ENCODE measurements at regions of chr12 and their contacts with region 1.

Region 1: DNA sequence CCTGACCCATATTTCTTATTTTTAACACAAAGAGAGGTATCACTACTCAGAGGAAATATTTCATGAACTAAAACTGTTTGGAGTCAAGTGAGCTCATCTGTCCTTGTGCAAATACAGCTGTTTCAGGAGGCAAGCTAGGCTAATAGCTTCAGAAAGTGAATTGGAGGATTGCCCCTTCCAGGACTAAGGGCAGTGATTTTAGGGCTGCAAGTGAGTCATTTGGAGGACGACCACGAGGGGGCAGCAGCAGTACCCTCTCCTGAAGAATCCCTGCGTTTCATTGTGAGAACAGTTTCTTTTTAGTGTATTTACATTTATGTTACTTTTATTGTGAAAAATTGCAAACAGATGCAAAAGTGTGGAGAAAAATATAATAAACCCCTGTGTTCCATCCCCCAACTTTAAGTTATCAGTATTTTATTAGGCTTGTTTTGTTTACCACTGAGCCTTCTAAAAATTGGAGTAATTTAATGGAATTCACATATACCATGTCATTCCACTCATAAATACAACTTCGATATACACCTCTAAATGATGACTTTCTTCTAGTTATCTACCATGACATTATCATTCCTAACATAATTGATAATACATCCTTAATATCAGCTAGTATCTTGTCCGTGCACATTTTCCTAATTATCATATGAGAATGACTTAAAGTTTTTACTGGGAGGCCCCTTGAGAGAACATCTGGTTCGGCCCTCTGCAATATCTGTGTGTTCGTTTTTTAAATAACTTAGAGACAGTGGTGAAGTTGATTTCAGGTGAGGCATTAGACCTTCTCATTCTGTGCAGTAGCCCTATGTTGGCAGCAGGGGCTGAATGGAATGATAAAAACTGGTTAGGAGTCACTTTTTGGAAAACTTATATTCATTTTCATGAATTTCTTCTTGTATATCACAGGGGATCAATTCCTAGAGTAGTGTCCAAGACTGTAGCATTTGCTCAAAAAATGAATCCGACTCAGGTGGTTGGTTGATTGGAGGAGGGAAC is 13.7 kb downstream of the FOXJ2 start:
- DNase-seq: peak; percentile 60
- ATAC-seq: peak; percentile 74
- H3K4me3 Mint-ChIP-seq: no peak overlapping the region
- H3K27ac Mint-ChIP-seq: no peak overlapping the region
- H3K4me1 Mint-ChIP-seq: peaks cover 16% of the 10 kb centered on the region
- H3K27me3 Mint-ChIP-seq: no peaks in the 10 kb centered on the region
- CTCF ChIP-seq: peak; percentile 70

Region 2: DNA sequence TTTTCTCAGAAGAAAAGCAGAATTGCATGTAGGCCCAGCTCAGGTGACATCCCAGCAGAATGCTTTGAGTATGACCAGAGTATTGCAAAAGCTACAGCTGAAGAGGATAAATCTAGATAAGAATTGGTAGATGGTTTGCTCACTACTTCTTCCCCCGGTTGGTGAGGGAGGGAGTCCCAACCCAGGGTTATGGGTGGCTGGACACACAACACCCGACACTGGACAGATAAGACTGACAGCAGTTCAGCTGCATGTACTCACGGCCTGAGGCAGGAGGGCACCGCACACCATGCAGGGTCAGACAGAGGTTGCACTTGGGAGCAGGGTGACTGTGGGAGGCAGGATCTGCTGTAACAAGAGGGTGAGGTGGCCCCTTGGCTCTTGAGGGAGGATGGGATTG is 297.4 kb before region 1 on chr12:
- CTCF ChIA-PET with region 1: no interaction called
- POLR2A ChIA-PET with region 1: no interaction called
- intact Hi-C with region 1: no loop called
- DNase-seq: no peak
- ATAC-seq: no peak
- H3K4me3 Mint-ChIP-seq: no peak overlapping the region
- H3K27ac Mint-ChIP-seq: peak overlapping the region; percentile 65
- H3K4me1 Mint-ChIP-seq: peaks cover 27% of the 10 kb centered on the region
- H3K27me3 Mint-ChIP-seq: peaks cover 10% of the 10 kb centered on the region
- CTCF ChIP-seq: no peak

Region 3: DNA sequence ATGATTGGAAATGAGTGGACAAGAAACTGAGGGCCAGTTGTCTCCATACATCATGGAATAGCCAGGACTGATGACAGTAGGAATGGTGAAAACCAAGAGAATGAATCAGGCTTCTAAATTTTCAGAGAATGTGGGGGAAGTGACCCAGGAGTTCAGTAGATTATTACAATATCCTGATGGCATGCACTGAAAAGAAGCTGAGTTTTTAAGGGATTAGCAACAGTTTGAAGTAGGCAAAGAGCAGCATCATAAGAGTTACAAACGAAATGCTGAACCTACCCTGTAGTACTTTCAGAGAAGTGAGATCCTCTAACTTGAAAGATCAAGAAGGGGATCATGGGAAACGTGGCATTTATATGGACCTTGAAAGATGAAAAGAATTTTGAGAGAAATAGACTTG is 186.7 kb before region 1 on chr12:
- CTCF ChIA-PET with region 1: interaction called, 10 read pairs
- POLR2A ChIA-PET with region 1: no interaction called
- intact Hi-C with region 1: no loop called
- DNase-seq: no peak
- ATAC-seq: no peak
- H3K4me3 Mint-ChIP-seq: no peak overlapping the region
- H3K27ac Mint-ChIP-seq: no peak overlapping the region
- H3K4me1 Mint-ChIP-seq: peaks cover 2% of the 10 kb centered on the region
- H3K27me3 Mint-ChIP-seq: peaks cover 8% of the 10 kb centered on the region
- CTCF ChIP-seq: no peak

Region 4: DNA sequence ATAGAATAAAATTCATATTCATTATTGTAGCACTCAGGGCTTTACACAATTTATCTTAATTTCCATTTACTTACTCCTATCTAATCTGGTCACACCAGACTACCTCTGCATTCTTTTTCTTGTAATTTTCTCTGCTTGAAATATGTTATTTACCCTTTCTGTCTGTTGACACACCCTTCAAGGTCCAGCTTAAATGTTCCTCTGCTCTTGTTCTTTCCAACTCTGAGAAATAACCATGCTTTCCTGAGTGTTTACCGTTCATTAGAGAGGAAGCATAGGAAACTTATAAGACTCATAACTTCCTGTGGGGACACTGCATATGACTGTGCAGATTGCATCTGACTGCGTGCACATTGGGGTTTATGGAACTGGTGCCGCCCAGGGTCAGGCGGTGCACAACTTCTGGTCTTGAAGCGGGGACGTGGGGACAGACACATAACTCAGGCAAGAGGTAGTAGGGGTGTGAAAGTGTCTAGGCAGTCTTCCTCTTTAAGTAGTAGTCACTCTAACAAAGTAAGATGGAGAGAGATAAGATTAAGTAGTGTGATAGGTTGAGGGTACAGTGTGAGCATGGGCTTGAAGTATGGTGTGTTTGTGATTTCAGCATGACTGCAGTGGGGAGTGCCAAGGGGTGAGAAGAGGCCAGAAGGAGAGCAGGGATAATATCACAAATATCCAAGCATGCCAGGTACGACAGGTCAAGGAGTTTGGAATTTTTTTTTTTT is 56.3 kb before region 1 on chr12:
- CTCF ChIA-PET with region 1: no interaction called
- POLR2A ChIA-PET with region 1: no interaction called
- intact Hi-C with region 1: no loop called
- DNase-seq: no peak
- ATAC-seq: no peak
- H3K4me3 Mint-ChIP-seq: no peak overlapping the region
- H3K27ac Mint-ChIP-seq: no peak overlapping the region
- H3K4me1 Mint-ChIP-seq: peaks cover 4% of the 10 kb centered on the region
- H3K27me3 Mint-ChIP-seq: no peaks in the 10 kb centered on the region
- CTCF ChIP-seq: no peak

Region 5: GRCh38 chr12:8032242-8033152 is 13.8 kb before region 1 on chr12 and contains the start of gene FOXJ2:
- CTCF ChIA-PET with region 1: interaction called, 19 read pairs
- POLR2A ChIA-PET with region 1: interaction called, 3 read pairs
- intact Hi-C with region 1: loop called (anchors 2 kb)
- DNase-seq: peak; percentile 73
- ATAC-seq: peak; percentile 86
- H3K4me3 Mint-ChIP-seq: peak within 1 kb of the TSS; percentile 86
- H3K27ac Mint-ChIP-seq: peak within 1 kb of the TSS; percentile 74
- H3K4me1 Mint-ChIP-seq: peaks cover 53% of the 10 kb centered on the region
- H3K27me3 Mint-ChIP-seq: no peaks in the 10 kb centered on the region
- CTCF ChIP-seq: no peak
- total RNA-seq, gene FOXJ2: 12.5 and 13.6 TPM in 2 replicates

Region 6: GRCh38 chr12:8078398-8078797 is 32.1 kb after region 1 on chr12:
- CTCF ChIA-PET with region 1: interaction called, 53 read pairs
- POLR2A ChIA-PET with region 1: interaction called, 3 read pairs
- intact Hi-C with region 1: loop called (anchors 1 kb)
- DNase-seq: no peak
- ATAC-seq: no peak
- H3K4me3 Mint-ChIP-seq: no peak overlapping the region
- H3K27ac Mint-ChIP-seq: no peak overlapping the region
- H3K4me1 Mint-ChIP-seq: peaks cover 38% of the 10 kb centered on the region
- H3K27me3 Mint-ChIP-seq: peaks cover under 1% of the 10 kb centered on the region
- CTCF ChIP-seq: no peak

Region 7: GRCh38 chr12:8156845-8157244 is 110.6 kb after region 1 on chr12 and contains the start of gene ZNF705A:
- CTCF ChIA-PET with region 1: no interaction called
- POLR2A ChIA-PET with region 1: no interaction called
- intact Hi-C with region 1: no loop called
- DNase-seq: no peak
- ATAC-seq: no peak
- H3K4me3 Mint-ChIP-seq: no peak within 1 kb of the TSS
- H3K27ac Mint-ChIP-seq: no peak within 1 kb of the TSS
- H3K4me1 Mint-ChIP-seq: no peaks in the 10 kb centered on the region
- H3K27me3 Mint-ChIP-seq: peaks cover 13% of the 10 kb centered on the region
- CTCF ChIP-seq: no peak
- total RNA-seq, gene ZNF705A: not detected in 2 replicates

Measured in activated B cell treated with CpG ODN at 0.5 μM for 24 hours (primary cell).